ENCODE measurements at regions of chr1 and their contacts with region 1.

Region 1: DNA sequence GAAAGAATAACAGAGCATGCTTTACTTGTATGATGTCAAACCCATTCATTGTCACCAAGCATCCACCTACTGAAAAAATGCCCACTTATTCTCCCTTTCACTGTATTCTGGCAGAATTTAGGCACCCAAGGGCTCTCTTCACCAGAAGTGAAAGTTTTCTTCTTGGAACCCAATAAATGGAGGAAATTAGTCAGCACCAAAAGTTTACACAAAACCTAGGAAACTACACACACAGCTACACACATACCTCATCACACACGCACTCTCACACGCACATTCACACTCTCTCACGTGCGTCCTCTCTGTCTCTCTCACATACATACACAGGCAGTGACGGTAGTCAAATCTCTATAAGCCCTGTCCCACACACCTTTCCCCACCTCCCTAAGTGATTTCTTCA is 37.6 kb downstream of the MCOLN2 start:
- DNase-seq: peak; percentile 77
- ATAC-seq: peak; percentile 96
- H3K4me3 Mint-ChIP-seq: no peak overlapping the region
- H3K27ac Mint-ChIP-seq: peak overlapping the region; percentile 31
- H3K4me1 Mint-ChIP-seq: peaks cover 13% of the 10 kb centered on the region
- H3K27me3 Mint-ChIP-seq: no peaks in the 10 kb centered on the region
- CTCF ChIP-seq: no peak

Region 2: DNA sequence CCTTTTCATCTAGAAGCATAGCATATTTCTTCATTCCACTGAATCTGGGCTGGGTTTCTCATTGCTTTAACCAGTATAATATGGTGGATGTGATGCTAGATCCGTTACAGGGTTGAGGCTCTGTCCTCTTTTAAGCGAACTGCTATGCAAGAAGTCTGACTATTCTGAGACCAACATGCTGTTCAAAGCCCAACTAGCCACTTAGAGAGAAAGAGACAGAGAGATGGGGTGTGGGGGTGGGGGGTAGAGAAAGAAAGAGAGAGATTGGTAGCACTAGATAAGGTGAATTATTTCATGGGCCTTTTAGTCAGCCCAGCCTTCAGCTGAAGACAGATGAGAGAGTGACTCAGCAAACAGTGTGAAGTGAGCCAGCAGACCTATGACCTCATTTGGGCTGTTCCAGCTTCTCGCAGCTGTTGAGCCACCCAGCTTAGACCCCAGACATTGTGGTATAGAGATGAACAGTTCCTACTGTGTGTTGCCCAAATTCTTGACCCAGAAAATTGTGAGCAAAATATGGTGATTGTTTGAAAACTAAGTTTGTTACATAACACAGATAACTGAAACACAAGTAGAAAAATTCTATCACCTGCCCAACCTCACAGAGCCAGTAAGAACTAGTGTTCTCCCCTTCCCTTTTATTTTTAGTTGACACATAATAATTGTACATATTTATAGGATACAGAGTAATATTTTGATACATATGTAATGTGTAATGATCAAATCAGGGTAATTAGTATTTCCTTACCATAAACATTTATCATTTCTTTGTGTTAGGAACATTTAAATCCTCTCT is 855.9 kb before region 1 on chr1:
- CTCF ChIA-PET with region 1: no interaction called
- POLR2A ChIA-PET with region 1: no interaction called
- intact Hi-C with region 1: no loop called
- DNase-seq: peak; percentile 35
- ATAC-seq: peak; percentile 89
- H3K4me3 Mint-ChIP-seq: no peak overlapping the region
- H3K27ac Mint-ChIP-seq: no peak overlapping the region
- H3K4me1 Mint-ChIP-seq: peaks cover 9% of the 10 kb centered on the region
- H3K27me3 Mint-ChIP-seq: no peaks in the 10 kb centered on the region
- CTCF ChIP-seq: no peak

Region 3: DNA sequence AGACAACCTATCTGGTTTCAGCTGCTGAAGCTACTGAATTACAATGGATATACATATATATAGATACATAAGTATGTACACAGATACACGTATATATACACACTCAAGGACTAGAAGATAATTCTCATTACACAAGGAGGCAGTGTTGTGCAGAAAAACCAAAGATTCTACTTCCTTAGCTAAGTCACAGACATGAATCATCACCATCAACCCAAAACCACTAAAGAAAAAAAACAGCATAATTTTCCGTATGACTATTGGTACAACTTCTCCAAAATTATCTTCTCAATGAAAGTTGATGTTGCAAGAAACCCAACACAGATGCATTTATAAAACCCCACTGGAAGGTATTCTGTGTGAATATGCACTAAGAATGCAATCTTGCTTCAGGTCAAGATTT is 517.0 kb before region 1 on chr1:
- CTCF ChIA-PET with region 1: no interaction called
- POLR2A ChIA-PET with region 1: no interaction called
- intact Hi-C with region 1: no loop called
- DNase-seq: no peak
- ATAC-seq: peak; percentile 94
- H3K4me3 Mint-ChIP-seq: no peak overlapping the region
- H3K27ac Mint-ChIP-seq: peak overlapping the region; percentile 26
- H3K4me1 Mint-ChIP-seq: peaks cover 12% of the 10 kb centered on the region
- H3K27me3 Mint-ChIP-seq: peaks cover 3% of the 10 kb centered on the region
- CTCF ChIP-seq: peak; percentile 80

Region 4: DNA sequence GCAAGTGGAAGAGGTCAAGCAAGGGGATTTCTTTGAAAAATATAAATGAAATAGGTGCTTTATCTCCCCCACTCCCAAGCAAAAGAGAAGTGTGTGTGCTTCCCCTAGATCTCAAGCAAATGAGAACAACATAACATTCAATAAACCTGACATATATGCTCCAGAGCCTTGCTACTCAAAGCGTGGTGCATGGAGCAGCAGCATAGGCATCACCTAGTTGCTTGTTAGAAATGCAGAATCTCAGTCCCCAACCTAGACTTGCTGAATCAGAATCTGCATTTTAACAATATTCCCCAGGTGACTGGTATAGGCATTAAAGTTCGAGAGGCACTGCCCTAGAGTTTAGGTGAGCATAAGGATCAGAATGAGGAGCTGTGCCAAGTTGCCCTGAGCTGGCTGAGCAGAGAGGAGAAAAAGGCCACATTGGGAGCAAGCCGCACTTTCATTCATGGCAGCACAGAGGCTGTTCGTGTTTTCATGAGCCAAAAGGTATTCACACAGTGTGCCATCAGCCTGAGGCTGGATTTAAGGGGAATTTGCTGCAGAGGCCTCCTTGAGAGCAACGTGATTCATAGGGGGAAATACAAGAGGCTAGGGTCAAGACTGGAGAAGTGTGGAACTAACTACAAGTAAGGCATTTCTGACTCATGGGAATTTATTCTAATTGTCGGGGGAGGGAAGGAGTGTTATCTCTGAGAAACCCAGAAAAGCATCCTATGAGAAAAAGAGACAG is 52.0 kb before region 1 on chr1:
- CTCF ChIA-PET with region 1: no interaction called
- POLR2A ChIA-PET with region 1: no interaction called
- intact Hi-C with region 1: no loop called
- DNase-seq: no peak
- ATAC-seq: no peak
- H3K4me3 Mint-ChIP-seq: no peak overlapping the region
- H3K27ac Mint-ChIP-seq: no peak overlapping the region
- H3K4me1 Mint-ChIP-seq: no peaks in the 10 kb centered on the region
- H3K27me3 Mint-ChIP-seq: peaks cover 3% of the 10 kb centered on the region
- CTCF ChIP-seq: no peak

Region 5: DNA sequence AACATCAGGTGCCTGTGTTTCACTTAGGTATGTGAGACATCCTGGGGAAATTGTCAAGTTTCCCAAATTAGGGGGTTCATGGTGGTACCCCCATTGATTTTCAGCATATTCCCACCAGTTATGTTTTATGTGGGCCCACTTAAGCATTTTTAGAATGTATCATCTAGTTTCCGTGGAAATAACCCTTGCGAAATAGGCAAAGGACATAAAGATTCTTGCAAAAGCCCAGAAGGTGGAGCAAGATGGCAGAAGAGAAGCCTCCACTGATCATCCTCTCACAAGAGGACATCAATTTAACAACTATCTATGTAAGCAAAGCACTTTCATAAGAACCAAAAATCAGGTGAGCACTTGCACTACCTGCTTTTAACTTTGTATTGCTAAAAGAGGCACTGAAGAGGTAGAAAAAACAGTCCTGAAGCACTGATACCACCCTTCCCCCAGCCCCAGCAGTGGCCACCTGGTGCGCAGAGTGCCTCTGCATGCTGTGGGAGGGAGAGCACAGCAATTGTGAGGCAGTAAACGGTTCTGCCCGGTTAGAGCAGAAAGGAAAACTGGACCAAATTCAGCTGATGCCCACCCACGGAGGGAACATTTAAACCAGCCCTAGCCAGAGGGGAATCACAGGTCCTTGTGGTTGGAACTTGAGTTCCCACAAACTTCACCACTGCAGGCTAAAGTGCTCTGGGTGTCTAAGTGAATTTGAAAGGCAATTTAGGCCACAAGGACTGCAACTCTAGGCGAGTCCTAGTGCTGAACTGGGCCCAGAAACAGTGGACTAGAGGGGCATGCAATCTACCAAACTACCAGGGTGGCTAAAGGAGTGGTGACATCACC is 14.4 kb after region 1 on chr1:
- CTCF ChIA-PET with region 1: interaction called, 12 read pairs
- POLR2A ChIA-PET with region 1: interaction called, 6 read pairs
- intact Hi-C with region 1: no loop called
- DNase-seq: peak; percentile 34
- ATAC-seq: no peak
- H3K4me3 Mint-ChIP-seq: no peak overlapping the region
- H3K27ac Mint-ChIP-seq: peak overlapping the region; percentile 51
- H3K4me1 Mint-ChIP-seq: peaks cover 56% of the 10 kb centered on the region
- H3K27me3 Mint-ChIP-seq: peaks cover 4% of the 10 kb centered on the region
- CTCF ChIP-seq: no peak

Region 6: GRCh38 chr1:85027242-85027983 is 68.1 kb after region 1 on chr1:
- CTCF ChIA-PET with region 1: interaction called, 23 read pairs
- POLR2A ChIA-PET with region 1: no interaction called
- intact Hi-C with region 1: no loop called
- DNase-seq: peak; percentile 42
- ATAC-seq: peak; percentile 89
- H3K4me3 Mint-ChIP-seq: no peak overlapping the region
- H3K27ac Mint-ChIP-seq: peak overlapping the region; percentile 80
- H3K4me1 Mint-ChIP-seq: peaks cover 13% of the 10 kb centered on the region
- H3K27me3 Mint-ChIP-seq: peaks cover 1% of the 10 kb centered on the region
- CTCF ChIP-seq: peak; percentile 26

Measured in activated CD8-positive, alpha-beta T cell treated with anti-CD3 and anti-CD28 coated beads for 36 hours (primary cell).